ENCODE measurements at regions of chr11 and their contacts with region 1.

Region 1: GRCh38 chr11:64803163-64803845 is at the start of gene MAP4K2:
- DNase-seq: peak; percentile 69 to 91 (median 80)
- H3K4me3 ChIP-seq: peak within 1 kb of the TSS; percentile 51 to 97 (median 75)
- H3K27ac ChIP-seq: peak within 1 kb of the TSS; percentile 71 to 98 (median 93)
- H3K27me3 ChIP-seq: no peaks in the 10 kb centered on the region
- CTCF ChIP-seq: peak in 48 of 56 donors; percentile 1 to 65 (median 41)
- total RNA-seq, gene MAP4K2: 26.4 to 59.7 (median 38.5) TPM

Region 2: GRCh38 chr11:64778508-64779346 is 24.6 kb before region 1 on chr11 and contains the start of gene SF1:
- intact Hi-C with region 1: loop called (anchors 2 kb)
- DNase-seq: peak; percentile 99 to 100 (median 100)
- H3K4me3 ChIP-seq: peak within 1 kb of the TSS; percentile 70 to 99 (median 91)
- H3K27ac ChIP-seq: peak within 1 kb of the TSS; percentile 82 to 100 (median 98)
- H3K27me3 ChIP-seq: no peaks in the 10 kb centered on the region
- CTCF ChIP-seq: peak in 52 of 56 donors; percentile 11 to 70 (median 46)
- total RNA-seq, gene SF1: 198 to 357 (median 281) TPM

Region 3: DNA sequence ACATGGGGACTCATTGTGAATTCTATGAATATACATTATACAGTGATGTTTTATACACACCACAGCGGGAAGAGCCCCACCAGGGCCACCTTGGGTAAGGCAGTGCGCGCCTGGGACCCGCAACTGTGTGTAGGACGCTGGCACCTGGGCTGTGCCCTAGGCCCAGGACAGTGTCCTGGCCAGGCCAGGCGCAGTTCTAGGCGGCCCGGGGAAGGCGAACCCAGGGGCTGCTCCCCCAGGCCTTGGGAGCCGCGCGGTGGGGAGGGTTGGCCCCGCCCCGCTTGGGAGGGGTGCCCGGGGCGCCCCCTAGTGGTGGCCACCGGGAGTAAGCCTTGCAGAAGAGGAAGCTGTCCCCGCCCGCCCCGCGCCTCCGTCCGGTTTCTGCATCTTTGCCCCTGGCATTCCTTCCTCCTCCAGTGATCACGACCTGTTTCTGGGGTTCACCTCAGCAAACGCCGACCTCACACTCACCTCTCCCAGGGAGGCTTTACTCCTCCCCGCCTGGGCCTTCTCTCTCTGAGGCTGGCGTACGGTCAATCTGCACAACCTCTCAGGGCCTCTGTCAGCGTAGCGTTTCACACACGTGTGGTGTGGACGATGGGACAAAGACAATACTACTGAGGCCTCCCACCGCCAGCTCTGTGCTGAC is 84.6 kb after region 1 on chr11:
- intact Hi-C with region 1: loop called in 1 of 2 experiments (anchors 5 kb)
- DNase-seq: peak in 9 of 10 donors; percentile 60 to 88 (median 72)
- H3K4me3 ChIP-seq: peak overlapping the region in 55 of 59 donors; percentile 2 to 63 (median 37)
- H3K27ac ChIP-seq: peak overlapping the region in 28 of 59 donors; percentile 19 to 80 (median 60)
- H3K27me3 ChIP-seq: no peaks in the 10 kb centered on the region
- CTCF ChIP-seq: peak; percentile 75 to 99 (median 96)

Region 4: DNA sequence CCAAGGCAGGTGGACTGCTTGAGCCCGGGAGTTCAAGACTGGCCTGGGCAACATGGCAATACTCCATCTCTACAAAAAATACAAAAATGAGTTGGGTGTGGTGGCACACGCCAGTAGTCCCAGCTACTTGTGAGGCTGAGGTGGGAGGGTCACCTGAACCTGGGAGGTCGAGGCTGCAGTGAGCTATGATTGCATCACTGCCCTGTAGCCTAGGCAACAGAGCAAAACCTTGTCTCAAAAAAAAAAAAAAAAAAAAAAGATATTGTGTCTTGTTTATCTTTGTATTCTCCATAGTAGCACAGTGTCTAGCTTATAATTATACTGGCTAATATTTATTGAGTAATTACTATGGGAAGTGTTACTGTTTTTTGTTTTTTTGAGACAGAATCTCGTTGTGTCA is 148.2 kb after region 1 on chr11:
- intact Hi-C with region 1: no loop called
- DNase-seq: no peak
- H3K4me3 ChIP-seq: no peak overlapping the region
- H3K27ac ChIP-seq: no peak overlapping the region
- H3K27me3 ChIP-seq: peaks cover 0 to 9% (median 0%) of the 10 kb centered on the region in 45 donors
- CTCF ChIP-seq: no peak